ENCODE measurements at regions of chr3 and their contacts with region 1.

Region 1: GRCh38 chr3:139329345-139329850 is 14.4 kb upstream of the MRPS22 start:
- DNase-seq: peak; percentile 92
- ATAC-seq: peak; percentile 100
- H3K4me3 Mint-ChIP-seq: peak overlapping the region; percentile 51
- H3K27ac Mint-ChIP-seq: no peak overlapping the region
- H3K4me1 Mint-ChIP-seq: peaks cover 15% of the 10 kb centered on the region
- H3K27me3 Mint-ChIP-seq: peaks cover 34% of the 10 kb centered on the region

Region 2: GRCh38 chr3:138935848-138936740 is 393.3 kb before region 1 on chr3:
- CTCF ChIA-PET with region 1: interaction called, 14 read pairs
- DNase-seq: peak; percentile 67
- ATAC-seq: peak; percentile 77
- H3K4me3 Mint-ChIP-seq: peak overlapping the region; percentile 52
- H3K27ac Mint-ChIP-seq: no peak overlapping the region
- H3K4me1 Mint-ChIP-seq: peaks cover 24% of the 10 kb centered on the region
- H3K27me3 Mint-ChIP-seq: peaks cover 86% of the 10 kb centered on the region

Region 3: GRCh38 chr3:139111392-139112229 is 217.8 kb before region 1 on chr3:
- CTCF ChIA-PET with region 1: interaction called, 44 read pairs
- DNase-seq: peak; percentile 71
- ATAC-seq: peak; percentile 66
- H3K4me3 Mint-ChIP-seq: no peak overlapping the region
- H3K27ac Mint-ChIP-seq: no peak overlapping the region
- H3K4me1 Mint-ChIP-seq: peaks cover 14% of the 10 kb centered on the region
- H3K27me3 Mint-ChIP-seq: peaks cover 32% of the 10 kb centered on the region

Region 4: GRCh38 chr3:139318431-139318816 is 11.0 kb before region 1 on chr3:
- CTCF ChIA-PET with region 1: interaction called, 11 read pairs
- DNase-seq: no peak
- ATAC-seq: no peak
- H3K4me3 Mint-ChIP-seq: no peak overlapping the region
- H3K27ac Mint-ChIP-seq: no peak overlapping the region
- H3K4me1 Mint-ChIP-seq: no peaks in the 10 kb centered on the region
- H3K27me3 Mint-ChIP-seq: peaks cover 16% of the 10 kb centered on the region